ENCODE measurements at regions of chr1 and their contacts with region 1.

Region 1: GRCh38 chr1:202348509-202349205 is at the start of gene PPP1R12B:
- DNase-seq: peak; percentile 94
- ATAC-seq: peak; percentile 99
- H3K4me3 ChIP-seq: peak within 1 kb of the TSS; percentile 88
- H3K27ac ChIP-seq: peak within 1 kb of the TSS; percentile 40; the same call in 1 of the 2 replicates
- H3K4me1 ChIP-seq: no peaks in the 10 kb centered on the region; the same call in 1 of the 2 replicates
- H3K27me3 ChIP-seq: no peaks in the 10 kb centered on the region
- CTCF ChIP-seq: no peak
- EP300 ChIP-seq: no peak
- POLR2A ChIP-seq: peak; percentile 77
- RAD21 ChIP-seq: no peak
- polyA plus RNA-seq, gene PPP1R12B: 0.29 to 0.61 TPM

Region 2: GRCh38 chr1:202433155-202434043 is 84.7 kb after region 1 on chr1:
- CTCF ChIA-PET with region 1: interaction called, 11 read pairs
- POLR2A ChIA-PET with region 1: interaction called, 4 read pairs
- RAD21 ChIA-PET with region 1: interaction called, 3 read pairs
- SMC1A ChIA-PET with region 1: no interaction called
- in situ Hi-C with region 1: no loop called
- intact Hi-C with region 1: no loop called
- DNase-seq: no peak
- ATAC-seq: no peak
- H3K4me3 ChIP-seq: no peak overlapping the region
- H3K27ac ChIP-seq: no peak overlapping the region
- H3K4me1 ChIP-seq: no peaks in the 10 kb centered on the region
- H3K27me3 ChIP-seq: no peaks in the 10 kb centered on the region
- CTCF ChIP-seq: no peak
- EP300 ChIP-seq: no peak
- POLR2A ChIP-seq: no peak
- RAD21 ChIP-seq: no peak

Region 3: DNA sequence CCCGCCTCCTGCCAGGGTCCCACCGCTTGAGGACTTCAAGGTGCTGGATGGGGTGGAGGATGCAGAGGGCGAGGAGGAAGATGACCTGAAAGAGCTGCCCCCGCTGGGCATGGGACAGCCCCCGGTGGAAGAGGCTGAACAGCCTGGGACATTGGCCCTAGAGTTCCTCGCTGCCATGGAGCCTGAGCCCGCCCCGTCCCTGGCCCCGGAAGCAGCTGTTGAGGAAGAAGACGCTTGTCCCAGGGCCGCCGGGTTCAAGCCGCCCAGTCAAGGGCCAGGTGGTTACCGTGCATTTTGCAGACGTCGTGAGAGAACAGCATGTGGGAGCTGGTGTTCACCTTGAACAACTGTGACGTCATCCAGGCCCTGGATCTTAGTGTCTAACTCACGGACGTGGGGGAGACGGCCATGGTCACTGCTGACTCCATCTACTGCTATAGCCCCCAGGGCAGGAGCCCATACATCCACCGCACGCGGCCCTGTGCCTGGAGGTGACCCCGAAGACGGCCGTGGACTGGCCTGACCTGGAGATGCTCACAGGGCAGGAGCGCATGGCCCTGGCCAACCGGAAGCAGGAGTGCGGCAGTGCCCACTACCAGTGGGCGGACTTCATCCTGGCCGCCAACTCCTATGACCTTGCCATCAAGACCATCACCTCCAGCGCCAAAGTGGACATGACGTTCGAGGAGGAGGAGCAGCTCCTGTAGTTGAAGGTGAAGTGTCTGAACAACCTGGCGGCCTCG is 89.9 kb after region 1 on chr1:
- CTCF ChIA-PET with region 1: interaction called, 4 read pairs
- POLR2A ChIA-PET with region 1: interaction called, 4 read pairs
- RAD21 ChIA-PET with region 1: interaction called, 4 read pairs
- SMC1A ChIA-PET with region 1: interaction called, 3 read pairs
- in situ Hi-C with region 1: no loop called
- intact Hi-C with region 1: loop called (anchors 10 kb)
- DNase-seq: no peak
- ATAC-seq: no peak
- H3K4me3 ChIP-seq: no peak overlapping the region
- H3K27ac ChIP-seq: no peak overlapping the region
- H3K4me1 ChIP-seq: no peaks in the 10 kb centered on the region
- H3K27me3 ChIP-seq: no peaks in the 10 kb centered on the region
- CTCF ChIP-seq: no peak
- EP300 ChIP-seq: no peak
- POLR2A ChIP-seq: no peak
- RAD21 ChIP-seq: no peak

Region 4: GRCh38 chr1:202462342-202463076 is 113.9 kb after region 1 on chr1:
- CTCF ChIA-PET with region 1: interaction called, 15 read pairs
- POLR2A ChIA-PET with region 1: no interaction called
- RAD21 ChIA-PET with region 1: interaction called, 6 read pairs
- SMC1A ChIA-PET with region 1: interaction called, 4 read pairs
- in situ Hi-C with region 1: no loop called
- intact Hi-C with region 1: no loop called
- DNase-seq: no peak
- ATAC-seq: no peak
- H3K4me3 ChIP-seq: no peak overlapping the region
- H3K27ac ChIP-seq: no peak overlapping the region
- H3K4me1 ChIP-seq: no peaks in the 10 kb centered on the region
- H3K27me3 ChIP-seq: no peaks in the 10 kb centered on the region
- CTCF ChIP-seq: no peak
- EP300 ChIP-seq: no peak
- POLR2A ChIP-seq: no peak
- RAD21 ChIP-seq: no peak

Region 5: DNA sequence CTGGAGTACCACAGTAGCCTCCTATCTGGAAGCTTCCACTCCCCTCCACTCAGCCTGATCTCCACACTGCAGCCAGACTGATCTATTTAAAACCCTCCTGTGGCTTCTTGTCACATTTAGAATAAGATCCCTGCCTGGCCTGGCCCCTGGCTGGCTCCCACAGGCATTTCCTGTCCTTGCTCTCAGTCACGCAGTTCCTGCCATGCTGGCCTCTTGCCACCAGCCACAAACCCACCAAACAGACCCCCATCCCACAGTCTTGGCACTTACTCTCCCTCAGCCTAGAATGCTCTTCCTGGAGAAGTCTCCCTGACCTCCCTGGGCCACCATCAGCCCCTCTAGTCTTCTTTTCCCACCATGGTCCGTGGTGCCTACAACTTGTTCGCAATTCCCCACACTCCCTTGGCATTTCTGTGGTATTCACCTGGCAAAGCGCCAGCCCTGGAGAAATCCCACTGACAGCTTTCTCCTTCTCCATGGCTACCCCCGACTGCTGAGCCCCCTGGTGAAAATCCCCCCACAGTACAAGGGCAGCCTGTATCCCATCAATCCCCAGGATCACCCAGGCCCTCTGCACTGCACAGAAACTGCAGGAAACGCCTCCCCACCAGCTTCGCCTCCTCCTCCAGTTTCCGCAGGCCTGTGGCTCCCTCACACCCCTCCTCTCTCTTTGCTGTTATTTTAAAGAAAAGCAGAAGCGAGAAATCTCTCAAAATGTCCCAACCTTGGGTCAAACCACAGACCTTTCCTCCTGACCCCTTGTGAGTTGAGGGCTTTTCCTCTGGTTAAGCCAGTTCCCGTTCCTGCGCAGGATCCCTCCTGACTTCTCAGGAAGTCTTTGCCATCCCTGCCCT is 267.1 kb after region 1 on chr1:
- CTCF ChIA-PET with region 1: interaction called, 5 read pairs
- POLR2A ChIA-PET with region 1: no interaction called
- RAD21 ChIA-PET with region 1: no interaction called
- SMC1A ChIA-PET with region 1: interaction called, 3 read pairs
- in situ Hi-C with region 1: no loop called
- intact Hi-C with region 1: loop called (anchors 5 kb)
- DNase-seq: peak; percentile 70
- ATAC-seq: peak; percentile 85
- H3K4me3 ChIP-seq: peak overlapping the region; percentile 42; the same call in 1 of the 2 replicates
- H3K27ac ChIP-seq: peak overlapping the region; percentile 72
- H3K4me1 ChIP-seq: peaks cover 40% of the 10 kb centered on the region
- H3K27me3 ChIP-seq: no peaks in the 10 kb centered on the region
- CTCF ChIP-seq: no peak
- EP300 ChIP-seq: peak; percentile 62 to 75; a peak in 3 of 4 replicates
- POLR2A ChIP-seq: no peak
- RAD21 ChIP-seq: no peak

Region 6: GRCh38 chr1:204147392-204148097 is 1798.9 kb after region 1 on chr1:
- CTCF ChIA-PET with region 1: no interaction called
- POLR2A ChIA-PET with region 1: no interaction called
- RAD21 ChIA-PET with region 1: no interaction called
- SMC1A ChIA-PET with region 1: no interaction called
- in situ Hi-C with region 1: no loop called
- intact Hi-C with region 1: no loop called
- DNase-seq: no peak
- ATAC-seq: no peak
- H3K4me3 ChIP-seq: no peak overlapping the region
- H3K27ac ChIP-seq: no peak overlapping the region
- H3K4me1 ChIP-seq: no peaks in the 10 kb centered on the region
- H3K27me3 ChIP-seq: peaks cover 6 to 7% of the 10 kb centered on the region in 2 experiments; a peak in 3 of 4 replicates
- CTCF ChIP-seq: no peak
- EP300 ChIP-seq: no peak
- POLR2A ChIP-seq: no peak
- RAD21 ChIP-seq: no peak

Measured in GM12878 (cell line).